HepG2 (cell line): ENCODE measurements at regions of chr13 and their contacts with region 1.

Region 1: GRCh38 chr13:60396783-60397703 is at the start of gene TDRD3:
- DNase-seq: peak; percentile 81
- ATAC-seq: peak; percentile 84
- H3K4me3 ChIP-seq: peak within 1 kb of the TSS; percentile 82 to 91 (median 87)
- H3K27ac ChIP-seq: peak within 1 kb of the TSS; percentile 99
- H3K4me1 ChIP-seq: peaks cover 30% of the 10 kb centered on the region
- H3K27me3 ChIP-seq: no peaks in the 10 kb centered on the region; a peak in 1 of 5 replicates
- CTCF ChIP-seq: peak; percentile 81
- EP300 ChIP-seq: no peak
- POLR2A ChIP-seq: peak; percentile 70 to 71
- RAD21 ChIP-seq: no peak; the same call in 1 of the 2 replicates
- total RNA-seq, gene TDRD3: 11.8 and 13.3 TPM in 2 replicates

Region 2: GRCh38 chr13:60163478-60164233 is 233.4 kb before region 1 on chr13 and contains the start of gene DIAPH3:
- CTCF ChIA-PET with region 1: no interaction called
- POLR2A ChIA-PET with region 1: no interaction called
- in situ Hi-C with region 1: loop called (anchors 5 kb)
- intact Hi-C with region 1: loop called (anchors 5 kb)
- DNase-seq: peak; percentile 90
- ATAC-seq: peak; percentile 100
- H3K4me3 ChIP-seq: peak within 1 kb of the TSS; percentile 70 to 92 (median 73)
- H3K27ac ChIP-seq: peak within 1 kb of the TSS; percentile 80
- H3K4me1 ChIP-seq: peaks cover 32% of the 10 kb centered on the region
- H3K27me3 ChIP-seq: no peaks in the 10 kb centered on the region; a peak in 1 of 5 replicates
- CTCF ChIP-seq: no peak
- EP300 ChIP-seq: no peak
- POLR2A ChIP-seq: peak; percentile 90 to 91
- RAD21 ChIP-seq: no peak
- total RNA-seq, gene DIAPH3: 9.3 and 10.1 TPM in 2 replicates

Region 3: DNA sequence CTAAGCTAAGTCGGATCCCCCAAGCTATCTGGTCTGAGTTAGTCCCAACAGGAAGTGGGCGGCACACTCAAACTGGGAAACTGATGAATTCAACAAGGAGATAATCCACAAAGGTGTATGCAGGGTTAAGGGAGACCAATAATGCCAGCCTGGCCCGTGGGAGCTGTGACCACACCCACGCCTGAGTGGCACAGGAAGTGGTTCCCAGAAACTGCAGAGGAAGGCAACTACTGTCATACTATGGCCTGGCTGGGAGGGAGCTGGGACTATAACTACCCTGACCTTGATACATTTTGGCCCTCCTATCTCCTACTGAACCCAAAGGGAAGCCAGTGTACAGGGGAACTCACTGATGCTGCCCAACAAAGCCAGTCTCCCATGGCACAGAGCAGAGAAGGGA is 85.5 kb before region 1 on chr13:
- CTCF ChIA-PET with region 1: no interaction called
- POLR2A ChIA-PET with region 1: no interaction called
- in situ Hi-C with region 1: no loop called
- intact Hi-C with region 1: no loop called
- DNase-seq: no peak
- ATAC-seq: no peak
- H3K4me3 ChIP-seq: no peak overlapping the region
- H3K27ac ChIP-seq: no peak overlapping the region
- H3K4me1 ChIP-seq: no peaks in the 10 kb centered on the region
- H3K27me3 ChIP-seq: peaks cover 0 to 8% of the 10 kb centered on the region in 2 experiments; a peak in 1 of 5 replicates
- CTCF ChIP-seq: no peak
- EP300 ChIP-seq: no peak
- POLR2A ChIP-seq: no peak
- RAD21 ChIP-seq: no peak

Region 4: GRCh38 chr13:60431108-60431700 is 34.2 kb after region 1 on chr13:
- CTCF ChIA-PET with region 1: no interaction called
- POLR2A ChIA-PET with region 1: interaction called, 3 read pairs
- in situ Hi-C with region 1: no loop called
- intact Hi-C with region 1: loop called (anchors 1 kb)
- DNase-seq: peak; percentile 47
- ATAC-seq: peak; percentile 80
- H3K4me3 ChIP-seq: no peak overlapping the region
- H3K27ac ChIP-seq: no peak overlapping the region
- H3K4me1 ChIP-seq: no peaks in the 10 kb centered on the region
- H3K27me3 ChIP-seq: no peaks in the 10 kb centered on the region
- CTCF ChIP-seq: peak; percentile 72
- EP300 ChIP-seq: no peak
- POLR2A ChIP-seq: no peak
- RAD21 ChIP-seq: peak; percentile 58; the same call in 1 of the 2 replicates